ENCODE measurements at regions of chr10 and their contacts with region 1.

Region 1: GRCh38 chr10:71191531-71192076 is 20.8 kb upstream of the UNC5B start:
- DNase-seq: peak in 1 of 2 experiments; percentile 72
- H3K4me3 ChIP-seq: no peak overlapping the region
- H3K27ac ChIP-seq: no peak overlapping the region
- H3K4me1 ChIP-seq: peaks cover 0 to 2% (median 0%) of the 10 kb centered on the region in 4 experiments; a peak in 3 of 7 replicates
- H3K27me3 ChIP-seq: no peaks in the 10 kb centered on the region; a peak in 2 of 7 replicates
- CTCF ChIP-seq: no peak
- EP300 ChIP-seq: no peak
- POLR2A ChIP-seq: no peak
- RAD21 ChIP-seq: no peak

Region 2: DNA sequence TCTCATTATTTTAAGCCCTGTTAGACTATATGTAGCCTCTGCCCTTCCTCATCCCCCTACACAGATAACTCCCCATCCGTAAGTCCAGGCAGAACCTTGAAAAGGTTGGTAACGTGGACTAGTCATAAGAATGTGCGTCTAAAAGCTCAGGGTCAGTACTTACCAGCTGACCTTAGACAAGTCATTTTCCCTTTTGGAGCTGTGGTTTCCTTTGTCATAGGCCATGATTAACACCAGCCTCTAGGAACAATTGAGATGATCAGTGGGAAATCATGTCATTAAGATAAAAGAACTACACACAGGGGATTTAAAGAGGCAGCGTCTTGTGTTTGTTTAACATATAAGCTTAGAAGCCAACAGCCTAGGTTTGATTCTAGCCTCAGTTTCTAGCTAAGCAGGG is 13.9 kb after region 1 on chr10:
- CTCF ChIA-PET with region 1: interaction called, 10 read pairs
- POLR2A ChIA-PET with region 1: no interaction called
- DNase-seq: no peak
- H3K4me3 ChIP-seq: no peak overlapping the region
- H3K27ac ChIP-seq: no peak overlapping the region
- H3K4me1 ChIP-seq: peaks cover 0 to 9% (median 4%) of the 10 kb centered on the region in 4 experiments; a peak in 5 of 7 replicates
- H3K27me3 ChIP-seq: peaks cover 1 to 11% (median 7%) of the 10 kb centered on the region in 4 experiments
- CTCF ChIP-seq: no peak
- EP300 ChIP-seq: no peak
- POLR2A ChIP-seq: no peak
- RAD21 ChIP-seq: no peak